ENCODE measurements at regions of chr10 and their contacts with region 1.

Region 1: GRCh38 chr10:69800109-69800508 is 1.6 kb upstream of the COL13A1 start:
- DNase-seq: no peak
- CTCF ChIP-seq: peak; percentile 30

Region 2: DNA sequence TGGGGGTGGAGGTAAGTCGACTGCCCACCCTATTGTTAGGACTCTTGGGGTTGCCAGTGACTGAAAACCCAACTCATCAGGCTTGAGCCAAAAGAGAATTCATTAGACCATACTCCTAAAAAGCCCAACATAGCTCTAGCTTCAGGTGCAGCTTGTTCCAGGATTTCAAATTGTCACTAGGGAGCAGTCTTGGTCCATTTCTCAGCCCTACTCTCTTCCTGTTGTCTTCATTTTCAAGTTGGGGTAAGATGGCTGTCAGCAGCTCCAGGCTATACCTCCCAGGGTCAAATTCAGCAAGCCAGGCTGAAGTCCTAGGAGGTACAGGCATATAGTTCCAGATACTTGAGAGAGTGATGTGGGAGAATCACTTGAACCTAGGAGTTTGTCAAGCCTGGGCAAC is 13.3 kb before region 1 on chr10:
- CTCF ChIA-PET with region 1: interaction called, 18 read pairs
- POLR2A ChIA-PET with region 1: no interaction called
- DNase-seq: no peak
- CTCF ChIP-seq: no peak

Region 3: GRCh38 chr10:69844698-69845097 is 44.6 kb after region 1 on chr10:
- CTCF ChIA-PET with region 1: no interaction called
- POLR2A ChIA-PET with region 1: no interaction called
- DNase-seq: no peak
- CTCF ChIP-seq: no peak

Measured in GM10248 (cell line).